Activated T-helper 2 cell treated with anti-CD3 and anti-CD28 coated beads, Interferon-gamma antibody, Interleukin-2, Interleukin-4, amounts not matched to agents 10 μg/mL and 5 μg/mL and 100 μg/mL, durations not matched to agents 14 hours and 24 hours and 36 hours (primary cell): ENCODE measurements at regions of chr13 and their contacts with region 1.

Region 1: GRCh38 chr13:40666045-40666904 is at the start of gene FOXO1:
- DNase-seq: peak; percentile 87
- H3K4me3 Mint-ChIP-seq: peak within 1 kb of the TSS; percentile 86
- H3K27ac Mint-ChIP-seq: peak within 1 kb of the TSS; percentile 93
- H3K4me1 Mint-ChIP-seq: peaks cover 33% of the 10 kb centered on the region
- H3K27me3 Mint-ChIP-seq: no peaks in the 10 kb centered on the region
- total RNA-seq, gene FOXO1: 38.2 and 38.3 TPM in 2 replicates

Region 2: DNA sequence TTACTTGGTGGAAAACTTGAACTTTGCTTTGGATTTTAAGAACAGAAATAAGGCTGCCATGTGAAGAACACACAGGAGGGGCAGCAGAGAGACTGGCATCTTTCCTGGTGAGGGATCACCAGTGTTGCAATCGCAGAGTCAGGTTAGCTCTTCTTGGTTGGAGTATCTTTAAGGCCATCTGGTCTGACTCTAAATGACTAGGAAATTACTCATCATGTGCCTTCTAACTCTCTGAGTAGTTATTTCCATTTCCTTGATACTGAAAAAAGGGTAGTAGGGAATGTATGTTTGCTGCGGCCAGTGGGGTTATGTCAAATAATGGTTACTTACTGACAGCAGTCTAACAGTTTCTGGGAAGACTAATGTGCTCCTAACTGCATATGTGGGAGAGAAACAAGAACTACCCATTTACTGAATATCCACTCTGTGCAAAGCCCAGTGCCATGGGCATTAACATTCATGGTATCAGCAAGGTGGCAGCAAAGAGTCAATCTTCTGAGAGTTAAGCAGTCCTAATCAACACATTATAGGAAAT is 888.7 kb before region 1 on chr13:
- intact Hi-C with region 1: loop called (anchors 1 kb)
- DNase-seq: no peak
- H3K4me3 Mint-ChIP-seq: no peak overlapping the region
- H3K27ac Mint-ChIP-seq: peak overlapping the region; percentile 86
- H3K4me1 Mint-ChIP-seq: peaks cover 50% of the 10 kb centered on the region
- H3K27me3 Mint-ChIP-seq: no peaks in the 10 kb centered on the region

Region 3: GRCh38 chr13:40069173-40070044 is 596.9 kb before region 1 on chr13:
- intact Hi-C with region 1: loop called (anchors 5 kb)
- DNase-seq: peak; percentile 51
- H3K4me3 Mint-ChIP-seq: no peak overlapping the region
- H3K27ac Mint-ChIP-seq: no peak overlapping the region
- H3K4me1 Mint-ChIP-seq: peaks cover 22% of the 10 kb centered on the region
- H3K27me3 Mint-ChIP-seq: no peaks in the 10 kb centered on the region

Region 4: DNA sequence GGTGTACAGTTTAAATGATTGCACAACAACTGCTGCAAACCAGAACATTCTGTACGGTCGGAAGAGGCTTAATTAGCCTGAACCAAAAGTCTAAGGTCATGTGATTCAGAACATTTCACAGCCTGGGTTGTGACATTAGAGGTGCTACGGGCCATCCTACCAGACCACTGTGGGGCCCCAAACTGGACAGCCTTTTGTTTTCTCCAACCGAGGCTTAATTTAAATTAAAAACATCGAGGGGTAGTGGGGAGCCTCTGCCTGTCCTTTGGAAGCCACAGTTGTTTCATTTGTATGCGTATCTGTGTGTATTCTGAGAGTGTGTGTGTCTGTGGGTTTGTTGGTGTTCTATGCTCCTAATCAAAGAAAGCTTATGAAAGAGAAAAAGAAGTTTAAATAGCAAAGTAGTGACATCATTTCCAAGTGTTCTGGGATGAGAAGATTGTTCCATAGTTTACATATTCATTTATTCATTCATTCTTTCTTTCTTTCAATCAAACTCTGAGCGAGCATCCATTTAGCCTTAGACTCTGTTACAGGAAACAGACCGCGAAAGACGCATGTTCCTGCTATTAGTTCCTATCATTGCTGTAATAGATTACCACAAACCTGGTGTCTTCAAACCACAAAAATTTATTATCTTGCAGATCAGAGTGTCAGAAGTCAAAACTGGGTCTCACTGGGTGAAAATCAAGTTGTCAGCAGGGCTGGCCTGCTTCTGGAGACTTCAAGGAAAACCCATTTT is 444.6 kb before region 1 on chr13:
- intact Hi-C with region 1: loop called (anchors 2 kb)
- DNase-seq: peak; percentile 17
- H3K4me3 Mint-ChIP-seq: peak overlapping the region; percentile 1
- H3K27ac Mint-ChIP-seq: peak overlapping the region; percentile 83
- H3K4me1 Mint-ChIP-seq: peaks cover 38% of the 10 kb centered on the region
- H3K27me3 Mint-ChIP-seq: peaks cover 2% of the 10 kb centered on the region

Region 5: DNA sequence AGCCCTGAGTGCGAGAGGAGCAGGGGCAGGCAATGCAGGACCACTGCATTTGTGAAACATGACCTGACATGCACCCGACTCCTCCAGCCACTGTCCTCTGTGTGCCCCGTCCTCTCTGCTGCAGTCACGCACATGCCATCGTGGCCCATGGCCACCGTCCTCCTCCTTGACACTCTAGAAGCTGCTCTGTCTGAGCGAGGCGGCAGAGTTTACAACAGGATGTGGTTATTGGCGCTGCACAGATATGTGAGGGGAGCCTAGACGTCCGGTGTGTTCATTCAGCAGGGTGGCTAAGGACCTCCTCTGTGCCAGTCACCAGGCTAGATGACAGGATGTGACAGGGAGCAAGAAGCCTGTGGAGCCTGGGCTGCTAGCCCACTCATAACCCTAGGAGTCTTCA is 277.7 kb before region 1 on chr13:
- intact Hi-C with region 1: loop called (anchors 5 kb)
- DNase-seq: peak; percentile 83
- H3K4me3 Mint-ChIP-seq: peak overlapping the region; percentile 80
- H3K27ac Mint-ChIP-seq: peak overlapping the region; percentile 98
- H3K4me1 Mint-ChIP-seq: peaks cover 38% of the 10 kb centered on the region
- H3K27me3 Mint-ChIP-seq: no peaks in the 10 kb centered on the region

Region 6: DNA sequence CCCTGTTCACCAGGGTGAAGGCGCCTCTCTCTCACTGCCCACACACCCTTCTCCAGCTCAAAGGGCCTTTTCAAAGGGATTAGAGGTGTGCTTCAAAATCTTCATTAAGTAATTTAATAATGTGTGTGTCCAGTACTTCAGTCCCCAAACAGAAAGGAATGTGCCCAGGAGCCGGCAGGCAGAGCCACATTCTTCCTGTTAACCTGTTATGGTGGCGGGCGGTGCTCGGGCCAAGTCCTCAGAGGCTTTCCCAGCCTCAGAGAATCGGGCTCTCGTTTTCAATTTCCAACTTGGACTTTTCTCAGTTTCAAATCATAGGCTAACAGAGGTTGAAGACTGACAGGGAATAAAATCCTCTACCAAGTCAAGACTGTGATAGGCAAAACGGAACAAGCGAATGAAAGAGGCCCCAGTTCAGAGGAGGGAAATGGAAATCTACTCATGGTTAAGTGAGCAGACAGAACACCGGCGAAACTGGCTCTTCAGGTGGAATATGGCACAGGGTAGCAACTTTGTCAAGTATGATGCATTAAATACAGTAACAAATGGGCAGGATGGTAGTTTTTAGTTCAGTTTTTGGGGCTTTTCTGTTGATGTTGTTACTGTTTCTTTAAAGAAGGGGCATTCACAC is 68.4 kb before region 1 on chr13:
- intact Hi-C with region 1: loop called (anchors 2 kb)
- DNase-seq: no peak
- H3K4me3 Mint-ChIP-seq: peak overlapping the region; percentile 7
- H3K27ac Mint-ChIP-seq: peak overlapping the region; percentile 47
- H3K4me1 Mint-ChIP-seq: peaks cover 67% of the 10 kb centered on the region
- H3K27me3 Mint-ChIP-seq: no peaks in the 10 kb centered on the region

Region 7: DNA sequence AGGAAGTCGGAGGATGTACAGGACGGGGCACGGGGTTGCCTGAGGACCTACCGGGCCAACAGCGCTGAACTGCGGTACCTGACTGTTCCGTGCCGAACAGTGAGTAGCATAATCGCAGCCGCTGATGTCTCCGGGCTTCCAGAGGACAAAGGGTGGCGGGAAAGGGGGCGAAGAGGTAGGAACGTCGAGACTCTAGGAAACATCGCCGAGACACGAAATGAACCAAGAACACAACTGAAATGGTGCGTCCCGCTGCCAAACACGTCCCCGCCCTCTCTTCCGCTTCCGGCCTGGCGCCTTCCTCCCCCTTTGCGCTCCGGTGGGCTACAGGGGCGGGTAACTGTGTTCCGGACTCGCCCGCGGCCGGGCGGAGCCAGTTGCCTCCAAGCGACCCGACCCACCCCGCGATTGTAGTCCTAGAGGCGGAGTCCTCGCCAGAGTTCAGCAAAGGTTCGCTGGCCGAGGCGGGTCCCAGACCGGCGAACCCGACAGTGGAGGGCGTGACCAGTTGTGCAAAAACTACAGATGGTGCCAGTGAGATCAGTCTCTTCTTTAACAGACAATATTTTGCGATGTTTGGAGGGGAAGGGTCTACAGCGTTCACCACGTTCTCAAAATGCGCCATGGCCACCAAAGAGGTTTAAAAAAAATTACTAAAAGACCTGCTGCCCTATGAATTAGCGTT is 104.8 kb after region 1 on chr13 and contains the start of gene MRPS31:
- intact Hi-C with region 1: loop called (anchors 2 kb)
- DNase-seq: peak; percentile 94
- H3K4me3 Mint-ChIP-seq: peak within 1 kb of the TSS; percentile 89
- H3K27ac Mint-ChIP-seq: peak within 1 kb of the TSS; percentile 90
- H3K4me1 Mint-ChIP-seq: peaks cover 36% of the 10 kb centered on the region
- H3K27me3 Mint-ChIP-seq: no peaks in the 10 kb centered on the region
- total RNA-seq, gene MRPS31: 42.9 and 43.1 TPM in 2 replicates